CD8-positive, alpha-beta T cell (primary cell): ENCODE measurements at regions of chr2 and their contacts with region 1.

Region 1: DNA sequence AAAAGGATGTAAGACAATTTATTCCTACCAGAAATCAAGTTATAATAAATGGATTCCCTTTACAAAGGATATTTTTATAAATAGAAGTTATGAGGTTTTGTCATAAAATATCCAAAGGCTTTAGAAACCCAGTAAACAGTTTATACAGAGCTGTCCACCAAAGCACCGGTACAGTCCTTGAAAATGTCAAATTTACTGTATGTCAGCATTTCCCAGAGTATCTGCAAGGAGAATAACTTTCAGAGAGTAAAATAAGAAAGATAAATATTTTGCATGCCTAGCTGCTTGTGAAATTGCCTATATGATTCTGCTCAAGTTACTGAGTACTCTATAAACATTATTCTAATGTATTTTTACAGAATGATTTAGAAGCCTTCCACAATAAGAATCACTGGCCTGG is 923.3 kb upstream of the DDX18 start:
- DNase-seq: no peak
- ATAC-seq: no peak
- H3K4me3 ChIP-seq: no peak overlapping the region
- H3K4me3 Mint-ChIP-seq: no peak overlapping the region
- H3K27ac ChIP-seq: no peak overlapping the region
- H3K27ac Mint-ChIP-seq: no peak overlapping the region
- H3K4me1 ChIP-seq: no peaks in the 10 kb centered on the region
- H3K4me1 Mint-ChIP-seq: no peaks in the 10 kb centered on the region
- H3K27me3 ChIP-seq: no peaks in the 10 kb centered on the region
- H3K27me3 Mint-ChIP-seq: no peaks in the 10 kb centered on the region
- CTCF ChIP-seq: no peak

Region 2: DNA sequence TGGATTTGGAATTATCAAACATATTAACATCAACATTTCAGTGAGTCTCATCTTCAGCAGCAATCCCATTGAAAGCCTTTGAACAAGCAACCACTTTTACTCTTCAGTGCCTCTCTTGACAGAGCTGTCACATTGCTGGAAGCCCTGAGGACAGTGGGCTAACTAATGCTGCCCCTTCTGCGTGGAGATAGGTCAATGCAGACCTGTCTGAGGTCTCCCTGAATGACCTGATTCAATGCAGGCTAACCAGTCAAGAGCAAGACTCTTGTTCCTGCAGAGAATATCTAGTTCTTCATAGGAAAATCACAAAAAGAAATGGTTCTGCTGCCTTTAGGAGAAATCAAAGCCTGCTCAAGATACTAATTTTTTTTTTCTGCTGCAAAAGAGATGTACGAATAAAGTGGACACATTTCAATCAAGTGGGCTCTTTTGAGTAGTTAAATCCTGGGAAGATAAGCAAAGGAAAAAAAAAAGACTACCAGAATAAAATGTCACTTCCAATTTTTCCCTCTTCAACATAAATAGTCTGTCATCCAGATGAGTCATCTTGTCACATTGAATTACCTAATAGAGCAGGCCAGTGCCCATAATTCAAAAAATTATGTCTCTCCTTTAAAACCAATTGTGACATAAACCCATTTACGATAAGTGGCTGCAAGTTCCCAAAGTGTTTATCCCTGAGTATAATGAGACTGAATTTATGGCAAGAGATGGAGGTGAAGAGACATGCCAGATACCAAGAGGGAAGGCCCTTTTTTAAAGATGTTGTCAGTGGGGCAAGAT is 345.7 kb before region 1 on chr2:
- CTCF ChIA-PET with region 1: no interaction called
- POLR2A ChIA-PET with region 1: no interaction called
- intact Hi-C with region 1: no loop called
- DNase-seq: no peak
- ATAC-seq: no peak
- H3K4me3 ChIP-seq: no peak overlapping the region
- H3K4me3 Mint-ChIP-seq: no peak overlapping the region
- H3K27ac ChIP-seq: no peak overlapping the region
- H3K27ac Mint-ChIP-seq: no peak overlapping the region
- H3K4me1 ChIP-seq: no peaks in the 10 kb centered on the region
- H3K4me1 Mint-ChIP-seq: no peaks in the 10 kb centered on the region
- H3K27me3 ChIP-seq: no peaks in the 10 kb centered on the region
- H3K27me3 Mint-ChIP-seq: no peaks in the 10 kb centered on the region
- CTCF ChIP-seq: no peak

Region 3: DNA sequence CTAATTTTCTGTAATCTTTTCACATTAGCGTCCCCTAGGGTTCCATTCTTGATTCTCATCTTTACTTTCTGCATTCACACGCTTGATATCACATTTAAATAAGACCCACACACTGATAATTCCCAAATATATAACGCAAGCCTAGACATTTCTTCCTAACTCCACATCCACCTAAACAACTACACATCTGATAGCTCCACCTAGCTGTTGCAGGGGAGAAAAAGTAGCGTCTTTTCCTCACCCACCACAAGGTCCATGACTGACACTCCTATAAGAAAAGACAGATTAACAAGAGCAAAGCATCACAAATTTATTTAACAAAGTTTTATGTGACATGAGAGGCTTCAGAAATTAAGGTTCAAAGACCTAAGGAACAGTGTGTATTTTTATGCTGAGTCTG is 61.1 kb after region 1 on chr2:
- CTCF ChIA-PET with region 1: no interaction called
- POLR2A ChIA-PET with region 1: no interaction called
- intact Hi-C with region 1: loop called in 1 of 2 experiments (anchors 10 kb)
- DNase-seq: no peak
- ATAC-seq: no peak
- H3K4me3 ChIP-seq: no peak overlapping the region
- H3K4me3 Mint-ChIP-seq: no peak overlapping the region
- H3K27ac ChIP-seq: no peak overlapping the region
- H3K27ac Mint-ChIP-seq: no peak overlapping the region
- H3K4me1 ChIP-seq: no peaks in the 10 kb centered on the region
- H3K4me1 Mint-ChIP-seq: no peaks in the 10 kb centered on the region
- H3K27me3 ChIP-seq: no peaks in the 10 kb centered on the region
- H3K27me3 Mint-ChIP-seq: no peaks in the 10 kb centered on the region
- CTCF ChIP-seq: no peak

Region 4: GRCh38 chr2:117085256-117085655 is 194.1 kb after region 1 on chr2:
- CTCF ChIA-PET with region 1: no interaction called
- POLR2A ChIA-PET with region 1: no interaction called
- intact Hi-C with region 1: no loop called
- DNase-seq: no peak
- ATAC-seq: no peak
- H3K4me3 ChIP-seq: no peak overlapping the region
- H3K4me3 Mint-ChIP-seq: no peak overlapping the region
- H3K27ac ChIP-seq: no peak overlapping the region
- H3K27ac Mint-ChIP-seq: no peak overlapping the region
- H3K4me1 ChIP-seq: no peaks in the 10 kb centered on the region
- H3K4me1 Mint-ChIP-seq: no peaks in the 10 kb centered on the region
- H3K27me3 ChIP-seq: no peaks in the 10 kb centered on the region
- H3K27me3 Mint-ChIP-seq: no peaks in the 10 kb centered on the region
- CTCF ChIP-seq: no peak

Region 5: GRCh38 chr2:118202707-118203303 is 1311.6 kb after region 1 on chr2:
- CTCF ChIA-PET with region 1: no interaction called
- POLR2A ChIA-PET with region 1: no interaction called
- intact Hi-C with region 1: no loop called
- DNase-seq: peak in 8 of 9 experiments; percentile 24 to 71 (median 54)
- ATAC-seq: peak; percentile 92
- H3K4me3 ChIP-seq: no peak overlapping the region
- H3K4me3 Mint-ChIP-seq: peak overlapping the region; percentile 0
- H3K27ac ChIP-seq: no peak overlapping the region
- H3K27ac Mint-ChIP-seq: no peak overlapping the region
- H3K4me1 ChIP-seq: no peaks in the 10 kb centered on the region
- H3K4me1 Mint-ChIP-seq: peaks cover 5% of the 10 kb centered on the region
- H3K27me3 ChIP-seq: no peaks in the 10 kb centered on the region
- H3K27me3 Mint-ChIP-seq: peaks cover 26% of the 10 kb centered on the region
- CTCF ChIP-seq: peak; percentile 77